ENCODE measurements at regions of chr2 and their contacts with region 1.

Region 1: DNA sequence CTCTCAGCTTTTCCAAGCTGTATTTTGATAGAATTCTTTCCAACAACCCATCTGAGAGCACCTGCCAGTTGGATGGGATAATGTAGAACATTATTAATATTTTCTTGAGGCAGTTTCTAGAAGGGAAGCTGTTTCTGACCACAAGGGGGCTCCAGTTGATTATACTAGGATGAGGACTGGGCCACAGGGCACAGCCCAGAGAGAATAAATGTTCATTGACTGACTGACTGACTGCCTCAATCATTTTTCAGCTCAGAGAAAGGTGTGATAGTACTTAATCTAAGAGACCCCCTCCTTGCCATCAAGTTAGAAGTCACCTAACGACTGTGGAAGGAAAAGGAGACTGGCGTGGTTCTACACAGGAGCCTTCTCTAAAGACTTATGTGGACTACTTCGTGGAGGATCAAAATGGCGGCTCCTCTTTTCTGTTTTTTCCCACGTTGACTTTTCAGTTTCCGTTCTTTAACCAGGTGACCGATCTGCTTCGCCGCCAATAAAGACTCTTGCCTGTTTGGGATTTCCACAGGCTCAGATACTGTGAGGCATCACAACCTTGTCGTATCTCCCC is 31.9 kb upstream of the CREG2 start:
- DNase-seq: no peak

Region 2: GRCh38 chr2:101697124-101698013 is 278.2 kb after region 1 on chr2 and contains the start of gene MAP4K4:
- intact Hi-C with region 1: loop called in 1 of 2 experiments (anchors 10 kb)
- DNase-seq: peak; percentile 95
- total RNA-seq, gene MAP4K4: 53.5 to 75.8 TPM

Region 3: GRCh38 chr2:101831351-101831865 is 412.2 kb after region 1 on chr2:
- intact Hi-C with region 1: loop called (anchors 2 to 10 kb)
- DNase-seq: peak; percentile 87

Region 4: DNA sequence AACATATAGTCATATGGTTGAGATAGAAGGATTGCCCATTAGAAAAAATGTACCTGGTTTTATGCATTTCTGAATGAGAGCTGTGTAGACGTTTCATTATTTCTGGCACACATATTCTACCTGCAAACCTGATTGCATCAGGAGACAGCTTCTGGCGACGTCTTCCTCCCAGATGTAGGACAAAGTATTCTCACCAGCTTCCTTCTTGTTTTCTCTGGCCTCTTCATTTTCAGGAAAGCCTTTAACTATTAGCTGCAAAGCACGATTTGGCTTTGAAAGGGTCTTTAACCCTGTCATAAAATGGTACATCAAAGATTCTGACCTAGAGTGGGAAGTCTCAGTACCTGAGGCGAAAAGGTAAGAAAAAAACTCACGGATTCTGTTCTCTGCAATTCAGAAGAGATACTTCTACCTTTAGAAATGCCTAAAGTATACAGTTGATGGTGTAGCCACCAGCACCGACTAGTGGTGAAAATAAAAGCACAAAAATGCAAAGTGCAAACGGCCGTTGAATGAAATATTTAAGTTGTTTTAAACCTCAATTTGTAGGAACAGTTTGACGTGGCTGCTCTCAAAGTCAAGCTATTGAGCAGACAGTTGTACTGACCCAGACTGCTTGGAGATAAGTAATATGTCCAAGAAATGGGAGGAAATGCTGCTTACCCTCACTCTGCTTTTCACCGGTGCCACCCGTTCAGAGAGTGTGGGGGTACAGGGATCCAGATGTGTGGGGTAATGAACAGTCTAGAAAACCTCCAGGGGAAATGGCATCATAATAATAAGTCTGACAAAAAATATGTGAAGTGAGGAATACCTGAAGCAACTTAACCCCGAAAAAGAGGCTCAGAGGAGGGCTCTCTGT is 1024.0 kb after region 1 on chr2:
- intact Hi-C with region 1: loop called in 1 of 2 experiments (anchors 10 kb)
- DNase-seq: no peak

Measured in posterior vena cava (tissue), 2 donors.